Left colon (tissue), 2 donors: ENCODE measurements at regions of chrX and their contacts with region 1.

Region 1: GRCh38 chrX:23907498-23908218 is at the starts of genes APOO and CXorf58:
- DNase-seq: peak; percentile 90 to 91
- ATAC-seq: peak; percentile 95
- total RNA-seq, gene APOO: 31.4 to 31.7 TPM
- total RNA-seq, gene CXorf58: not detected

Region 2: DNA sequence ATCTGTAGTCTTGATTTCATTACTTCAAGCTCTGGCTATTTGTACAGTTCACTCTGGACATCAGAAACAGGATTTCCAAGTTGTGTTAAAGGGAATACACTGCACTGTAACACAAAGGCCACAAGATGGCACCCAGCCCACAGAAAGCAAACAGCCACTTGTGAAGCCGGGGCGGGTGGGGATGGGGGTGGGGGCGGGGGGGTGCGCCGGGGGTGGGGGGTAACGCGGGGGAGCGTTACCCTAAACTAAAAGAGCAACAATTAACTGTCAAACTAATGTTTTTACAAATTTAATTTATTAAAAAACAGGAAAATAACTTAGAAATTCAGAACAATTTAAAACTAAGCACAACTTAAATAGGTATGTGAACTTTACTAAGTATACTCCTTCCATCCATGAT is 213.1 kb before region 1 on chrX:
- intact Hi-C with region 1: loop called (anchors 5 to 10 kb)
- DNase-seq: peak; percentile 30 to 58
- ATAC-seq: peak; percentile 77

Region 3: GRCh38 chrX:23756157-23756559 is 151.5 kb before region 1 on chrX:
- intact Hi-C with region 1: loop called in 1 of 2 experiments (anchors 10 kb)
- DNase-seq: peak; percentile 44 to 78
- ATAC-seq: peak; percentile 49